ENCODE measurements at regions of chr1 and their contacts with region 1.

Region 1: GRCh38 chr1:161165742-161166668 is at the start of gene PPOX:
- DNase-seq: peak; percentile 97 to 99 (median 99)
- H3K4me3 ChIP-seq: peak within 1 kb of the TSS; percentile 53 to 91 (median 77)
- H3K27ac ChIP-seq: peak within 1 kb of the TSS; percentile 97 to 98
- H3K4me1 ChIP-seq: peaks cover 3 to 29% (median 24%) of the 10 kb centered on the region in 4 experiments
- H3K27me3 ChIP-seq: no peaks in the 10 kb centered on the region

Region 2: GRCh38 chr1:161153679-161154426 is 12.2 kb before region 1 on chr1 and contains the start of gene UFC1:
- CTCF ChIA-PET with region 1: interaction called, 14 read pairs
- POLR2A ChIA-PET with region 1: interaction called, 6 read pairs
- DNase-seq: peak; percentile 94 to 97 (median 95)
- H3K4me3 ChIP-seq: peak within 1 kb of the TSS; percentile 63 to 99 (median 96)
- H3K27ac ChIP-seq: peak within 1 kb of the TSS; percentile 98
- H3K4me1 ChIP-seq: peaks cover 2 to 19% (median 17%) of the 10 kb centered on the region in 4 experiments
- H3K27me3 ChIP-seq: no peaks in the 10 kb centered on the region

Region 3: DNA sequence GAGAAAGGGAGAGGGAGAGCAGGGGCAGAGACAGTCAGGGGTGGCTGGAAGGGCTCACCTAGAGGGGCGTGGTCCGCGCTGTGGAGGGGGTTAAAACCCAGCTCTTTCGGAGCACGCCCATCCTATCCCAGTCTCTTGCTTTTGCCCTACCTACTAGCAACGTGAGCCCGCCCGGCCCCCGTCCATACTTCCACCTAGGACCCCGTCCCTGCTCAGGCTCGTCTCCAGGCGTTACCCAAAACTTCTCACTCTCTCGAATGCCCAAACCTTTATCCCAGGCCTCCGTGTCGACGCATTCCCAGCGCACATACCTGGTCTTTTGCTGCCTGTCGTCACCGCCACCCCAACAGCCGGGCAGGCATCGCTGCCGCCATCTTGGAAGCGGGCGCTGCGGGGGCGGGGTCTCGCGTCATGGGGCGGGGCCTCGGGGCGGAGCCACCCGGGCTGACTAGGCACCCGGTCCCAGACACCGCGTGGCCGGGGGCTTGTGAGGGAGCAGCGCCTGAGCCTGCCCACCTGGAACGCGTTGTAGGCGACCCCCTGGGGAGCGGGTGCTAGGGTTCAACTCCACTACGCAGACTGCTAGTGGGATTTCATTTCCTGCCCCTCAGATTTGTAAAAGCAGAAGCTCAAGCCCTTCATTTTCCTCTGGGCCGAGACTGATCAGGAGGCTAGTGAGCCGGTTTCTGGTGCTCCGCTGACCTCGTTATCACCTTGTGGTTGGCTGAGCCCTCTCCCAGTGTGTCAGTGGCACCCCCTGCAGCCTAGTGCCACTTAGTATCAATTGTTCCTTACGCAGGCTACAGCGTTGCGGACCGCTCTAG is 11.3 kb after region 1 on chr1 and contains the start of gene B4GALT3:
- CTCF ChIA-PET with region 1: interaction called, 45 read pairs
- POLR2A ChIA-PET with region 1: interaction called, 12 read pairs
- DNase-seq: peak; percentile 83 to 90 (median 86)
- H3K4me3 ChIP-seq: peak within 1 kb of the TSS; percentile 65 to 96 (median 94)
- H3K27ac ChIP-seq: peak within 1 kb of the TSS; percentile 77 to 86
- H3K4me1 ChIP-seq: peaks cover 1 to 32% (median 22%) of the 10 kb centered on the region in 4 experiments
- H3K27me3 ChIP-seq: no peaks in the 10 kb centered on the region

Region 4: GRCh38 chr1:161201828-161202725 is 36.1 kb after region 1 on chr1 and contains the start of gene NDUFS2:
- CTCF ChIA-PET with region 1: interaction called, 13 read pairs
- POLR2A ChIA-PET with region 1: no interaction called
- DNase-seq: peak; percentile 98 to 99 (median 98)
- H3K4me3 ChIP-seq: peak within 1 kb of the TSS; percentile 66 to 98 (median 89)
- H3K27ac ChIP-seq: peak within 1 kb of the TSS; percentile 77 to 89
- H3K4me1 ChIP-seq: peaks cover 0 to 54% (median 38%) of the 10 kb centered on the region in 4 experiments
- H3K27me3 ChIP-seq: no peaks in the 10 kb centered on the region

Region 5: DNA sequence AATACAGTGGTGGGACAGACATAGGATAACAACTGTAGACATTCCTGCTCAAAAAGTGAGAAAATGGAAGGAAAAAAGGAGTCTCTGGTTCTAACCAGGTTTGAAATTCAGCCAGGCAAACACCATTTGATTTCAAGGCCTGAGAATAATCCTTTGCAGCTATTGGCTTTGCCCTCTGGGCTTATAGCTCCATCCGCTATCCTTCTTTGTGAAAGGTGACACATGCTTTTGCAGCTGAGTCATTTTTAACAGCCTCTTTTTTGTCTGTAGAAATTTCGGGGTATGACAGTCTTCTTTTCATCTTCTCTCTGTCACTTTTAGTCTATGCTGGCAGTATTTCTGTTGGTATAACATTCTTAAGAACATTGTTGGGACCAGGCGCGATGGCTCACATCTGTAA is 164.3 kb after region 1 on chr1:
- CTCF ChIA-PET with region 1: no interaction called
- POLR2A ChIA-PET with region 1: no interaction called
- DNase-seq: no peak
- H3K4me3 ChIP-seq: no peak overlapping the region
- H3K27ac ChIP-seq: no peak overlapping the region
- H3K4me1 ChIP-seq: no peaks in the 10 kb centered on the region
- H3K27me3 ChIP-seq: no peaks in the 10 kb centered on the region

Measured in common myeloid progenitor, CD34-positive (primary cell).